ENCODE measurements at regions of chr6 and their contacts with region 1.

Region 1: GRCh38 chr6:39804466-39805065 is 12.4 kb downstream of the DAAM2 start:
- DNase-seq: peak; percentile 51
- H3K4me3 ChIP-seq: no peak overlapping the region
- H3K27ac ChIP-seq: no peak overlapping the region
- H3K4me1 ChIP-seq: no peaks in the 10 kb centered on the region
- H3K27me3 ChIP-seq: peaks cover 9% of the 10 kb centered on the region
- CTCF ChIP-seq: no peak

Region 2: GRCh38 chr6:38730140-38730862 is 1074.3 kb before region 1 on chr6:
- CTCF ChIA-PET with region 1: no interaction called
- dilution Hi-C with region 1: no loop called
- in situ Hi-C with region 1: no loop called
- intact Hi-C with region 1: no loop called
- DNase-seq: no peak
- H3K4me3 ChIP-seq: no peak overlapping the region
- H3K27ac ChIP-seq: no peak overlapping the region
- H3K4me1 ChIP-seq: no peaks in the 10 kb centered on the region
- H3K27me3 ChIP-seq: no peaks in the 10 kb centered on the region
- CTCF ChIP-seq: no peak

Region 3: DNA sequence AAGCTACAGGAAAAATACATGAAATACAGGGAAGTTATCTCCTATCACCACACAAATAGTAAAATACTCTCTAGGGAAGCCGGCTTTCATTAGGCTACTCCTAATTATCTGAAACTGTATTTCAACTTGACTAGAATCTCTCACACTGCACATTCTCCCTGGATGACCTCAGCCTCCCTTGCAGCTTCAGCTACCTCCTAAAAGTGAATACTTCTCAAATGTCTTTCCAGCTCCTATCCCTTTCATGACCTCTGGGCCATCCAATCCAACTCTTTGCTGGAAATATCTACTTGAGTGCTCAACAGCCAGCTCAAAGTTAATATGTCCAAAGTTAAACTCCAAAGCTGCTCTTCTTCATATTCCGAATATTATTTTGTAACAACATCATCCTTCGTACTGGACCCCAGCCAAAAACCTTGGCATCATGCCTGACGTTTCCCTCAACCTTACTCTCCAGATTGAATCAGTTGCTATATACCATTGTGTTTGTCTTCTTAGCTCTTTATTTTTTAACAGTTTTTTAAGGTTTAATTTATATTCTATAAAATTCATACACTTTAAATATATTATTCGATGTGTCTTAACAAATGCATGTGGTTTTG is 50.0 kb before region 1 on chr6:
- CTCF ChIA-PET with region 1: no interaction called
- dilution Hi-C with region 1: loop called (anchors 5 kb)
- in situ Hi-C with region 1: no loop called
- intact Hi-C with region 1: no loop called
- DNase-seq: no peak
- H3K4me3 ChIP-seq: no peak overlapping the region
- H3K27ac ChIP-seq: no peak overlapping the region
- H3K4me1 ChIP-seq: no peaks in the 10 kb centered on the region
- H3K27me3 ChIP-seq: no peaks in the 10 kb centered on the region
- CTCF ChIP-seq: no peak

Region 4: GRCh38 chr6:39999006-39999867 is 194.7 kb after region 1 on chr6:
- CTCF ChIA-PET with region 1: no interaction called
- dilution Hi-C with region 1: no loop called
- in situ Hi-C with region 1: no loop called
- intact Hi-C with region 1: no loop called
- DNase-seq: no peak
- H3K4me3 ChIP-seq: no peak overlapping the region
- H3K27ac ChIP-seq: no peak overlapping the region
- H3K4me1 ChIP-seq: no peaks in the 10 kb centered on the region
- H3K27me3 ChIP-seq: no peaks in the 10 kb centered on the region
- CTCF ChIP-seq: no peak

Region 5: DNA sequence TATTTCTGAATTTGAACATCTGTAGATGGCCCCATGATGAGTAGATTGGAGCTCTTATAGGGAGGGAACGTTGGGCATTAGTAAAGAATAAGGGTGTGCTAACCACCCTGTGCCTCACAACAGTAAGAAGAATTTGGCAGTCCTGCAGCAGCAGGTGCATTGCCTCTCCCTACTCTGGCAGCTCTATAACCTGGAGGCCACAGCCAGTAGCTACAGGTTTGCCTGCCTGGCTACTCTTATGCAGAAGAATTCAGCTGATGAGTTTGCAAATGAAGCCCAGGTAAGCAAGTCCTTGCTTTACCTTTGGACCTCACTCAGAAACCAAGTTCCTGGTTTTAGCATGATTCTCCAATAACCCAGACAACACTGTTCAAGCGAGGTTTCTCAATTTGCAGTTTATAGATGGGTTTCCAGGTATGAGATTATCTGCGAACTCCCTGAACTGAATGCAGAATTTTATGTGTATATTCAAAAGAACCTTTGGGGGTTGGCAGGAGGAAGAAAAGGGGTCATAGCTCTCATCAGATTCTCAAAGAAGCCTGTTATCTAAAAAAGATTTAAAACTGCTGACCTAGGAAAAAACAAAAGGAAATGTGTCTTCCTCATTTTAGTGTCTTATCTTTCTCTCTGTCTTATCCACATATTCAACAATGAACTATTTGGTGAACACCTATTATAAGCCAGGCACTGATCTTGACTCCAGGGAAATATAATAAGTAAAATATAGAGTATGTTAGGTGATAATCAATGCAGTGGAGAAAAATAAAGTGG is 1330.7 kb after region 1 on chr6:
- CTCF ChIA-PET with region 1: no interaction called
- dilution Hi-C with region 1: no loop called
- in situ Hi-C with region 1: no loop called
- intact Hi-C with region 1: no loop called
- DNase-seq: no peak
- H3K4me3 ChIP-seq: no peak overlapping the region
- H3K27ac ChIP-seq: no peak overlapping the region
- H3K4me1 ChIP-seq: peaks cover 7% of the 10 kb centered on the region
- H3K27me3 ChIP-seq: peaks cover 1% of the 10 kb centered on the region
- CTCF ChIP-seq: no peak

Measured in mammary epithelial cell (primary cell).